Esophagus muscularis mucosa (tissue), 4 donors: ENCODE measurements at regions of chr1 and their contacts with region 1.

Region 1: GRCh38 chr1:55277377-55278130 is 62.4 kb upstream of the USP24 start:
- DNase-seq: no peak
- H3K4me3 ChIP-seq: no peak overlapping the region
- H3K27ac ChIP-seq: no peak overlapping the region
- H3K4me1 ChIP-seq: peaks cover 0 to 29% (median 23%) of the 10 kb centered on the region in 4 donors
- H3K27me3 ChIP-seq: no peaks in the 10 kb centered on the region
- CTCF ChIP-seq: peak; percentile 76 to 89 (median 85)
- EP300 ChIP-seq: no peak
- POLR2A ChIP-seq: no peak

Region 2: GRCh38 chr1:55140546-55140983 is 137.0 kb before region 1 on chr1:
- intact Hi-C with region 1: loop called (anchors 1 kb)
- DNase-seq: no peak
- H3K4me3 ChIP-seq: no peak overlapping the region
- H3K27ac ChIP-seq: peak overlapping the region in 1 of 4 donors; percentile 46
- H3K4me1 ChIP-seq: peaks cover 0 to 11% (median 4%) of the 10 kb centered on the region in 4 donors
- H3K27me3 ChIP-seq: no peaks in the 10 kb centered on the region
- CTCF ChIP-seq: peak; percentile 79 to 83 (median 81)
- EP300 ChIP-seq: no peak
- POLR2A ChIP-seq: no peak

Region 3: GRCh38 chr1:55215256-55216021 is 62.1 kb before region 1 on chr1 and contains the start of gene USP24:
- intact Hi-C with region 1: loop called (anchors 5 kb)
- DNase-seq: peak; percentile 95
- H3K4me3 ChIP-seq: peak within 1 kb of the TSS; percentile 86 to 94 (median 92)
- H3K27ac ChIP-seq: peak within 1 kb of the TSS; percentile 96 to 99 (median 98)
- H3K4me1 ChIP-seq: peaks cover 35 to 59% (median 48%) of the 10 kb centered on the region in 4 donors
- H3K27me3 ChIP-seq: no peaks in the 10 kb centered on the region
- CTCF ChIP-seq: no peak
- EP300 ChIP-seq: no peak
- POLR2A ChIP-seq: peak; percentile 73
- total RNA-seq, gene USP24: 28.3 to 45.3 (median 37.7) TPM